PC-3 (cell line): ENCODE measurements at regions of chr2 and their contacts with region 1.

Region 1: GRCh38 chr2:43293744-43294695 is 67.6 kb upstream of the ZFP36L2 start:
- DNase-seq: peak; percentile 98
- ATAC-seq: peak; percentile 98
- H3K4me3 ChIP-seq: no peak overlapping the region
- H3K27ac ChIP-seq: peak overlapping the region; percentile 57
- H3K4me1 ChIP-seq: peaks cover 17% of the 10 kb centered on the region
- H3K27me3 ChIP-seq: no peaks in the 10 kb centered on the region
- CTCF ChIP-seq: no peak

Region 2: GRCh38 chr2:43306197-43306596 is 12.2 kb after region 1 on chr2:
- CTCF ChIA-PET with region 1: no interaction called
- POLR2A ChIA-PET with region 1: no interaction called
- intact Hi-C with region 1: loop called (anchors 1 kb)
- DNase-seq: no peak
- ATAC-seq: no peak
- H3K4me3 ChIP-seq: no peak overlapping the region
- H3K27ac ChIP-seq: no peak overlapping the region
- H3K4me1 ChIP-seq: peaks cover 14% of the 10 kb centered on the region
- H3K27me3 ChIP-seq: no peaks in the 10 kb centered on the region
- CTCF ChIP-seq: no peak

Region 3: GRCh38 chr2:43312755-43313641 is 19.0 kb after region 1 on chr2:
- CTCF ChIA-PET with region 1: no interaction called
- POLR2A ChIA-PET with region 1: no interaction called
- intact Hi-C with region 1: loop called (anchors 1 kb)
- DNase-seq: peak; percentile 79
- ATAC-seq: peak; percentile 91
- H3K4me3 ChIP-seq: no peak overlapping the region
- H3K27ac ChIP-seq: peak overlapping the region; percentile 38
- H3K4me1 ChIP-seq: peaks cover 37% of the 10 kb centered on the region
- H3K27me3 ChIP-seq: no peaks in the 10 kb centered on the region
- CTCF ChIP-seq: no peak

Region 4: GRCh38 chr2:43343573-43344304 is 49.7 kb after region 1 on chr2:
- CTCF ChIA-PET with region 1: no interaction called
- POLR2A ChIA-PET with region 1: no interaction called
- intact Hi-C with region 1: loop called (anchors 5 kb)
- DNase-seq: no peak
- ATAC-seq: no peak
- H3K4me3 ChIP-seq: no peak overlapping the region
- H3K27ac ChIP-seq: no peak overlapping the region
- H3K4me1 ChIP-seq: peaks cover 23% of the 10 kb centered on the region
- H3K27me3 ChIP-seq: no peaks in the 10 kb centered on the region
- CTCF ChIP-seq: no peak

Region 5: GRCh38 chr2:43358410-43359201 is 64.6 kb after region 1 on chr2:
- CTCF ChIA-PET with region 1: no interaction called
- POLR2A ChIA-PET with region 1: no interaction called
- intact Hi-C with region 1: no loop called
- DNase-seq: no peak
- ATAC-seq: no peak
- H3K4me3 ChIP-seq: no peak overlapping the region
- H3K27ac ChIP-seq: no peak overlapping the region
- H3K4me1 ChIP-seq: peaks cover 8% of the 10 kb centered on the region
- H3K27me3 ChIP-seq: no peaks in the 10 kb centered on the region
- CTCF ChIP-seq: no peak

Region 6: GRCh38 chr2:43370705-43371104 is 76.7 kb after region 1 on chr2:
- CTCF ChIA-PET with region 1: no interaction called
- POLR2A ChIA-PET with region 1: no interaction called
- intact Hi-C with region 1: loop called (anchors 5 kb)
- DNase-seq: no peak
- ATAC-seq: no peak
- H3K4me3 ChIP-seq: no peak overlapping the region
- H3K27ac ChIP-seq: no peak overlapping the region
- H3K4me1 ChIP-seq: no peaks in the 10 kb centered on the region; the same call in 1 of the 2 replicates
- H3K27me3 ChIP-seq: no peaks in the 10 kb centered on the region
- CTCF ChIP-seq: no peak

Region 7: GRCh38 chr2:43426305-43427031 is 132.4 kb after region 1 on chr2:
- CTCF ChIA-PET with region 1: no interaction called
- POLR2A ChIA-PET with region 1: no interaction called
- intact Hi-C with region 1: no loop called
- DNase-seq: peak; percentile 98
- ATAC-seq: peak; percentile 96
- H3K4me3 ChIP-seq: 0 out of 2 replicates have a peak overlapping the region, but pooled peaks have one; percentile 13
- H3K27ac ChIP-seq: peak overlapping the region; percentile 93
- H3K4me1 ChIP-seq: peaks cover 60% of the 10 kb centered on the region
- H3K27me3 ChIP-seq: no peaks in the 10 kb centered on the region
- CTCF ChIP-seq: no peak

Region 8: GRCh38 chr2:43478411-43479086 is 184.5 kb after region 1 on chr2:
- CTCF ChIA-PET with region 1: no interaction called
- POLR2A ChIA-PET with region 1: no interaction called
- intact Hi-C with region 1: loop called (anchors 1 kb)
- DNase-seq: peak; percentile 93
- ATAC-seq: peak; percentile 98
- H3K4me3 ChIP-seq: no peak overlapping the region
- H3K27ac ChIP-seq: peak overlapping the region; percentile 67
- H3K4me1 ChIP-seq: peaks cover 33% of the 10 kb centered on the region
- H3K27me3 ChIP-seq: no peaks in the 10 kb centered on the region
- CTCF ChIP-seq: no peak